Esophagus muscularis mucosa (tissue), 4 donors: ENCODE measurements at regions of chr6 and their contacts with region 1.

Region 1: DNA sequence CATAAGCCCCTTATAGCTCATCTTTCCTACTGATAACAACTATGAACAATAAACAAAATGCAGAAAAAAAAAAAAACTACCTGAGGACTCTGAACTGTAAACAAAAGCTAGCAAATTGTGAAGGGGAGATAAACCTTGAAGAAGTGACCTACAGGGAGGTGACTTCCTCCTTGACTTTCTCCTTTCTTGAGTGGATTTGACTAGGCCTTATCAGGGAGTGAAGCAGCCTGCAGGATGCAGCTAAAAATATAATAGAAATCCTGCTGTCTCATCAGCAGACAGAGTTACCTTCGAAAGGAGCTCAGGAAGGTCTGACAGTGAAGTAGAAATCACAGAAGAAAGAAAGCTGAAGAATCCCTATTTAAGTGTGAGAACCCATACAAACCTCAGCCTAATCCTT is 322.0 kb upstream of the HTR1E start:
- DNase-seq: no peak
- H3K4me3 ChIP-seq: no peak overlapping the region
- H3K27ac ChIP-seq: no peak overlapping the region
- H3K4me1 ChIP-seq: no peaks in the 10 kb centered on the region
- H3K27me3 ChIP-seq: no peaks in the 10 kb centered on the region
- CTCF ChIP-seq: no peak
- EP300 ChIP-seq: no peak
- POLR2A ChIP-seq: no peak

Region 2: DNA sequence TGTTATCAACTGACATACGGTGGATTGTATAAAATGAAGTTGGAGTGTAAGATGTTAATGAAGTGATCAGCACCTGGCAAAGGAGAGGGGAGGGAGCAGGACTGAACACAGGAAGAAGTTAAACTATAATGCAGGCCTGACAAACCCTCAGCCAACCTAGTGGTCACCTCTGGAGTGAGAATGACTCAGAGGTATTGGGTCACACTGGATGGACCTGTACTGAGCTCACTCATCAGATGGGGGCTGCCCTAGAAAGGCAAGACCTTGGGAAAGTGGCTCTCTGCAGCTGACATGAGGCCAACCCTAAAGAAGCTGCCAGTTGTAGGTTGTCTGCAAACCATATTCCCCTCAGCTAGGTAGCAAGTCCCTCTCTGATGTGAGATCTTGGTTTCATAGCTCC is 128.8 kb after region 1 on chr6:
- intact Hi-C with region 1: loop called (anchors 5 kb)
- DNase-seq: no peak
- H3K4me3 ChIP-seq: no peak overlapping the region
- H3K27ac ChIP-seq: no peak overlapping the region
- H3K4me1 ChIP-seq: no peaks in the 10 kb centered on the region
- H3K27me3 ChIP-seq: no peaks in the 10 kb centered on the region
- CTCF ChIP-seq: no peak
- EP300 ChIP-seq: no peak
- POLR2A ChIP-seq: no peak

Region 3: GRCh38 chr6:86913795-86914194 is 298.5 kb after region 1 on chr6:
- intact Hi-C with region 1: no loop called
- DNase-seq: no peak
- H3K4me3 ChIP-seq: no peak overlapping the region
- H3K27ac ChIP-seq: no peak overlapping the region
- H3K4me1 ChIP-seq: peaks cover 0 to 7% (median 0%) of the 10 kb centered on the region in 4 donors
- H3K27me3 ChIP-seq: no peaks in the 10 kb centered on the region
- CTCF ChIP-seq: no peak
- EP300 ChIP-seq: no peak
- POLR2A ChIP-seq: no peak